Heart right ventricle (tissue), 16 donors: ENCODE measurements at regions of chr10 and their contacts with region 1.

Region 1: GRCh38 chr10:95841661-95842498 is 65.9 kb upstream of the CC2D2B start:
- DNase-seq: peak in 1 of 2 donors; percentile 73
- ATAC-seq: peak in 7 of 8 donors; percentile 53 to 91 (median 84)
- H3K4me3 ChIP-seq: no peak overlapping the region
- H3K27ac ChIP-seq: peak overlapping the region in 9 of 10 donors; percentile 1 to 80 (median 65)
- H3K4me1 ChIP-seq: peaks cover 0 to 43% (median 19%) of the 10 kb centered on the region in 9 donors
- H3K27me3 ChIP-seq: no peaks in the 10 kb centered on the region
- CTCF ChIP-seq: peak; percentile 48 to 77 (median 65)

Region 2: GRCh38 chr10:95741807-95742467 is 99.9 kb before region 1 on chr10:
- intact Hi-C with region 1: loop called in 3 of 10 experiments (anchors 2 to 5 kb)
- DNase-seq: peak in 1 of 2 donors; percentile 74
- ATAC-seq: peak; percentile 94 to 99 (median 96)
- H3K4me3 ChIP-seq: no peak overlapping the region
- H3K27ac ChIP-seq: peak overlapping the region; percentile 62 to 85 (median 78)
- H3K4me1 ChIP-seq: peaks cover 0 to 41% (median 28%) of the 10 kb centered on the region in 9 donors
- H3K27me3 ChIP-seq: no peaks in the 10 kb centered on the region
- CTCF ChIP-seq: peak in 5 of 9 donors; percentile 12 to 50 (median 38)

Region 3: DNA sequence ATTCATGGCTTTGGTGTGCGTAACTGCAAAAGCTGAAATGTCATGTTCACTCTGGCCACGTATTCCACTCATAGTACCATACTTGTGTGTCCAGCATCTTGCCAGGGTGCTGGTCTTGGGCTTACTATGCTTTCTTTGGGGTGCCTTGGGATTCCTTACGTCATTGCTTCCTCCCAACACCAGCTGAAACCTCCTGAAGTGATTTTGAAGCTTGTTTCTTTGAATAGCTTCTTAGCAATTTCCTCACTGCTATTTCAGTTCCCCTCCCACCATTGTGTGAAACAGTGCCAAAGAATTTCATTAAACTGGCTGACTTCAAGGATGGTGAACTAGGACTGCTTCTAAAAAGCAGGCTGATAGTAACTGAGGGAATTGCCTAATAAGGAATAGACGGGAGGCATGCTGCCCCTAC is 49.0 kb before region 1 on chr10:
- intact Hi-C with region 1: loop called in 1 of 10 experiments (anchors 2 kb)
- DNase-seq: peak in 1 of 2 donors; percentile 57
- ATAC-seq: peak; percentile 50 to 94 (median 86)
- H3K4me3 ChIP-seq: no peak overlapping the region
- H3K27ac ChIP-seq: peak overlapping the region in 8 of 10 donors; percentile 61 to 88 (median 75)
- H3K4me1 ChIP-seq: peaks cover 0 to 73% (median 24%) of the 10 kb centered on the region in 9 donors
- H3K27me3 ChIP-seq: no peaks in the 10 kb centered on the region
- CTCF ChIP-seq: no peak